Activated CD8-positive, alpha-beta T cell treated with anti-CD3 and anti-CD28 coated beads, Interleukin-2, amount 10 ng/mL, durations not matched to agents 7 days and 5 days (primary cell): ENCODE measurements at regions of chr2 and their contacts with region 1.

Region 1: DNA sequence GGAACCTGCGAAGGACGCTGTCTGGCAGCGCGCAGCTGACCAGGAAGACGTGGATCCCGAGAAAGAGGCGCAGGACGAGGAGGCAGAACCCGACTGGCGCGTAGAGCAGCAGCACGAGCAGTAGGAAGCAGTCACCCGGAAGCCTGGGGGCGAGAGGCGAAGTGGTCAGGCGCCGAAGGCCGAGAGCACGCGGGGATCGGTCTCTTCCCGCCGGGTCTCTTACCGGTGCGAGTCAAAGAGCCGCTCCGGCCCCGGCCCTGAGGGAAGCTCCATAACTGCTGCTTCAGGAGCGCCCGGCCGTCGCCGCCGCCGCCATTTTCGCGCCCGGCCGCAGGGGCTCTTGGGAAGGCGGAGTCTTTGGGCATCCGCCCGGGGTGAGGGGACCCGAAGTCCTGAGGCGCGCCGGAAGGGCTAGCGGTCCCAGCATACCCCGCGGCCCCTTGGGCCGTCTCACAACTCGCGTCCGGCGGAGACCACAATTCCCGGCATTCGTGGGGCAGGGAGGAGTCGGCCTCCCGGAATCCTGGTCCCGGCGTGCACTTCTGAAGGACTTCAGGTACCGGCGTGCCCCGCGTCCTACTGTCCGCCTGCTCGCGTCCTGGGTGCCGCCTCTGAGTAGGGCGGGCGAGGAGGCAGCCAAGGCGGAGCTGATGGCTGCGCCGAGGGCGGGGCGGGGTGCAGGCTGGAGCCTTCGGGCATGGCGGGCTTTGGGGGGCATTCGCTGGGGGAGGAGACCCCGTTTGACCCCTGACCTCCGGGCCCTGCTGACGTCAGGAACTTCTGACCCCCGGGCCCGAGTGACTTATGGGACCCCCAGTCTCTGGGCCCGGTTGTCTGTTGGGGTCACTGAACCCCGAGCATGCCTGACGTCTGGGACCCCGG is at the starts of genes AUP1 and HTRA2:
- DNase-seq: peak; percentile 97
- ATAC-seq: peak; percentile 92
- H3K4me3 Mint-ChIP-seq: peak within 1 kb of the TSS; percentile 95
- H3K27ac Mint-ChIP-seq: peak within 1 kb of the TSS; percentile 93
- H3K4me1 Mint-ChIP-seq: peaks cover 50% of the 10 kb centered on the region
- H3K27me3 Mint-ChIP-seq: no peaks in the 10 kb centered on the region
- total RNA-seq, gene AUP1: 119 to 123 TPM
- total RNA-seq, gene HTRA2: 48.0 to 49.4 TPM

Region 2: DNA sequence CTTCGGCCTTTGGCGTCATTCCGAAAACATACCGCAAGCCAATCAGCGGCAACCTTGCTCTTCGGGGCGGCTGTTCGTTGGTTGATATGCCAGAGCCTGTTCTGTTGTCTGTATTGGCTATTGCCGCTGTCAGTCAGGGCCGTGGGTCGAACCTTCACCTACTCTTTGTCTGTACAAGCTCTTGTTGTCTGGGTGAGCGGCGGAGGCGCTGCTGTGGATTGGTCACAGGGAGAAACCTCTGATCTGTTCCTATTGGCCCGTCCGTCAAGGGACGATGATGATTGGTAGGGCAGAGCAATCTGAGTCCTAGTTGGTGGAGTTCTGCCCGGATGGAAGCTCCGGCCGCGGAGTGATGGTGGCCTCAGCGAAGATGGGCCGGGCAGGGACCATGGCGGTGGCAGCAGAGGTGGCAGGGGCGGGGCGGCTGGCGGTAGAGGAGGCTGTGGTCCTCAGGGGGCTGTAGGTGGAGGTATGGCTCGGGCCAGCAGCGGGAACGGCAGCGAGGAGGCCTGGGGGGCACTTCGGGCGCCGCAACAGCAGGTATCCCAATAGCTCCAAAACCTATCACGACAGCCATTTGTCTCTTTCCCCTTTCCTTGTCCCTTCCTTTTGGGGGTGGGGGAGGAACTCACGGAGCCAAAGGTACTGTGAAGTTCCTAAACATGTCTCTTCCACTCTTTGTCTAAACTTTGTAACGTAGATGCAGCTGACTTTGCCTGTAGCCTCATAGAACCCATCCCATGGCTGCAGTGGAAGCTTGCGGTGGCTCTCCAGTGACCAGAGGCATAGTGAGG is 71.3 kb before region 1 on chr2 and contains the start of gene WBP1:
- CTCF ChIA-PET with region 1: interaction called, 24 read pairs
- POLR2A ChIA-PET with region 1: interaction called, 24 read pairs
- DNase-seq: peak; percentile 100
- ATAC-seq: peak; percentile 91
- H3K4me3 Mint-ChIP-seq: peak within 1 kb of the TSS; percentile 99
- H3K27ac Mint-ChIP-seq: peak within 1 kb of the TSS; percentile 98
- H3K4me1 Mint-ChIP-seq: peaks cover 59% of the 10 kb centered on the region
- H3K27me3 Mint-ChIP-seq: no peaks in the 10 kb centered on the region
- total RNA-seq, gene WBP1: 34.0 to 34.3 TPM

Region 3: GRCh38 chr2:74472086-74472944 is 57.3 kb before region 1 on chr2 and contains the start of gene MRPL53:
- CTCF ChIA-PET with region 1: interaction called, 11 read pairs
- POLR2A ChIA-PET with region 1: interaction called, 5 read pairs
- DNase-seq: peak; percentile 97
- ATAC-seq: peak; percentile 95
- H3K4me3 Mint-ChIP-seq: peak within 1 kb of the TSS; percentile 98
- H3K27ac Mint-ChIP-seq: peak within 1 kb of the TSS; percentile 99
- H3K4me1 Mint-ChIP-seq: peaks cover 33% of the 10 kb centered on the region
- H3K27me3 Mint-ChIP-seq: no peaks in the 10 kb centered on the region
- total RNA-seq, gene MRPL53: 95.7 to 96.2 TPM

Region 4: DNA sequence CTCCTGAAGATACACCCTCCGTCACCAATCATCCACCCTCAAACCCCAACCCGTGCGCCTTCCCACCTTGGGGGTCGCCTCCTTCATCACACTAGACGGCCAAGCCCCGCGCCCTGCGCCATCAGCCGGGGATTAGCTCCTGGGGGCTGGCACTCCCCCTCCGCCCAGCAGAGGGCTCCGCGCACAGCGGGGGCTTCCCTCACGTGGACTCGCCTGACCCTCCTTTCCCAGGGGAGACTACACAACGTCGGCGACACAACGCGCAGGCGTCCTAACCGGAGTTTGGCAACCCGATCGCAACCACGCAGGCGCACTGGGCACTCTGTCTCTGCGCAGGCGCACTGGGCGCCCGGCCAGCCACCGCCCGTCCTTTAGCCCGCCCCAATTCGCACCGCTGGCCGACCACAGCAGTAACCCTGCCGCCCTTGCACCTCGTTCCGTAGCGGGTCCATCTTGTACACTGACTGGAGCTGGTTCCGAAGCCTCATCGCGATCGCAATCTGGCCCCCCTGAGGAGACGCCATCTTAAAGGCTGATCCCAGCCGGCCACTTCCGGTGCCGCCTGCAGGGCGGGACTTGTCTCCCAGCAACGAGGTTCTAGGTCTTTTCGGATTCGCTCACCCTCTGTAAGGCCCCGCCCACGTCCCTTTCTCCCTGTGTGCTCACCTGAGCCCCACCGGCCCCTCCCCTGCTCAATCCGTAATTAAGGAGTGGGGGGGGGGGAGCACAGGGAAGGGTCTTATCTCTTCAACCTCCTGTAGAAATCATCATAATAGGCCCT is 22.3 kb before region 1 on chr2 and contains the start of gene PCGF1:
- CTCF ChIA-PET with region 1: interaction called, 28 read pairs
- POLR2A ChIA-PET with region 1: interaction called, 17 read pairs
- DNase-seq: peak; percentile 99
- ATAC-seq: peak; percentile 90
- H3K4me3 Mint-ChIP-seq: peak within 1 kb of the TSS; percentile 100
- H3K27ac Mint-ChIP-seq: peak within 1 kb of the TSS; percentile 100
- H3K4me1 Mint-ChIP-seq: peaks cover 55% of the 10 kb centered on the region
- H3K27me3 Mint-ChIP-seq: peaks cover 35% of the 10 kb centered on the region
- total RNA-seq, gene PCGF1: 20.3 to 28.5 TPM

Region 5: GRCh38 chr2:74544634-74545033 is 15.0 kb after region 1 on chr2:
- CTCF ChIA-PET with region 1: interaction called, 22 read pairs
- POLR2A ChIA-PET with region 1: interaction called, 3 read pairs
- DNase-seq: peak; percentile 38
- ATAC-seq: no peak
- H3K4me3 Mint-ChIP-seq: no peak overlapping the region
- H3K27ac Mint-ChIP-seq: no peak overlapping the region
- H3K4me1 Mint-ChIP-seq: peaks cover 15% of the 10 kb centered on the region
- H3K27me3 Mint-ChIP-seq: peaks cover 48% of the 10 kb centered on the region

Region 6: DNA sequence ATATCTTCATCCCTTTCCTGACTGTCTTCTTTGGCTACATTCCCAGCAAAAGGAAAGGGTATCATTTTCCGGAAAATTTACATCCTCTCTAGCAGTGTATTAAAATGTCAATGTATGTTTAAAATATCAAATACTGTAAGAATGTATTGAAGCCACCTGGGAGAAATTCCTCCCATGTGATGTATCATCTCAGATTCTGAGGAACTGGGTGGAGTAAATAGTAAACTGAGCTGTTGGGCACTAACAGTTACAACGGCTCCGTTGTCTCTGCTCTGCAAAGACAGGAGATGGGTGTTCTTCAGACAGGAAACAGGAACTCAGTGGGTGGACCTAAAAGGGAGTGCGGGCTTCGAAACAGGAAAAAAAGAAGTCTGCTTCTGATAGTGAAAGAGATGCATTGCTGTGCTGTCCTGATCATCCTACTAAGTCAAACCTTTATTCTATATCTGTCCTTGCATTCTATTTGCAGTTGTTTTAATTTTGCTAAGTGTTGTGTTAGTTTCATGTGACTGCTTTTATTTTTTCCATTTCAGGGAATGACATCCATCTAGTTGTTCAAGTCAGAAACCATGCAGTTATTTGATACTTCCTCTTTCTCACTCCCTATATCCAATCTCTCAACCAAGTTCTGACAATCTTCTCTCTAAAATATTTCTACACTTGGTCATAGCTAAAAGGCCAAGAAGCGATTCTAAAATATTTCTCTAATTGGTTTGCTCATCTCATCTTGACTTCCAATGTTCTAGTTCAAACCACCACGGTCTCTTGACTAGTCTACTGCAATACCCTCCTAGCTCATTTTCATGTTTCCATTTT is 44.4 kb after region 1 on chr2:
- CTCF ChIA-PET with region 1: interaction called, 11 read pairs
- POLR2A ChIA-PET with region 1: interaction called, 4 read pairs
- DNase-seq: peak; percentile 48
- ATAC-seq: peak; percentile 89
- H3K4me3 Mint-ChIP-seq: peak overlapping the region; percentile 50
- H3K27ac Mint-ChIP-seq: peak overlapping the region; percentile 80
- H3K4me1 Mint-ChIP-seq: peaks cover 32% of the 10 kb centered on the region
- H3K27me3 Mint-ChIP-seq: no peaks in the 10 kb centered on the region

Region 7: DNA sequence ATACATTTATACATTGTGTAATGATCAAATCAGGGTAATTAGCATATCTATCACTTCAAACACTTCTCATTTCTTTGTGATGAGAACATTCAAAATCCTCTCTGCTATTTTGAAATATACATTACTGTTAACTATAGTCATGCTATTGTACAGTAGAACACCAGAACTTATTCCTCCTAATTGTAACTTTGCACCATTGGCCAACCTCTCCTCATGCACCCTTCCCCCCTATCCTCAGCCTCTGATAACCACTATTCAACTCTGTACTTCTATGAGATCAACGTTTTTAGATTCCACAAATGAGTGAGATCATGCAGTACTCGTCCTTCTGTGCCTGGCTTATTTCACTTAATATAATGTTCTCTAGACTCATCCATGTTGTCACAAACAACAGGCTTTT is 79.4 kb after region 1 on chr2:
- CTCF ChIA-PET with region 1: no interaction called
- POLR2A ChIA-PET with region 1: no interaction called
- DNase-seq: no peak
- ATAC-seq: no peak
- H3K4me3 Mint-ChIP-seq: no peak overlapping the region
- H3K27ac Mint-ChIP-seq: no peak overlapping the region
- H3K4me1 Mint-ChIP-seq: peaks cover 4% of the 10 kb centered on the region
- H3K27me3 Mint-ChIP-seq: peaks cover 52% of the 10 kb centered on the region

Region 8: GRCh38 chr2:74864846-74865722 is 335.5 kb after region 1 on chr2:
- CTCF ChIA-PET with region 1: no interaction called
- POLR2A ChIA-PET with region 1: no interaction called
- DNase-seq: no peak
- ATAC-seq: no peak
- H3K4me3 Mint-ChIP-seq: no peak overlapping the region
- H3K27ac Mint-ChIP-seq: no peak overlapping the region
- H3K4me1 Mint-ChIP-seq: peaks cover 44% of the 10 kb centered on the region
- H3K27me3 Mint-ChIP-seq: no peaks in the 10 kb centered on the region